Body of pancreas (tissue), 4 donors: ENCODE measurements at regions of chr13 and their contacts with region 1.

Region 1: DNA sequence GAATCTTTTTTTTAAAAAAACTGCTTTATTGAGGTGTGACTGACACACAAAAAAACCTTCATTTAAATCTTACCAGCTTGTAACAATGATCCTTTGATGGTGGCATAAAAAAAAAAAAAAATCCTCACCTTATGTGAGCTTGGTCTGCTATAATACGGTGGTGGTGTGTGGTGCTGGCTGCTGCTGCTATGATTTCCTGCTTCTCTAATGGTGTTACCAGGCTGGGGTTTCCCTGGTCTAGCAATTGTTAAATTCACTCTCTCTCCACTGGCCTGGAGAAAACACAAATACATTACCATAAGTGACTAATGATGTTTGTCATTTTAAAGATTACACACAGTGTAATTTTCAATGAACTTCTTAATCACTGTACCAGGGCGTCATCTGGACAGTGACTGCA is 60.6 kb downstream of the LNX2 start:
- DNase-seq: no peak
- ATAC-seq: no peak
- H3K4me3 ChIP-seq: no peak overlapping the region
- H3K27ac ChIP-seq: no peak overlapping the region
- H3K4me1 ChIP-seq: no peaks in the 10 kb centered on the region
- H3K27me3 ChIP-seq: no peaks in the 10 kb centered on the region
- CTCF ChIP-seq: no peak
- POLR2A ChIP-seq: no peak

Region 2: DNA sequence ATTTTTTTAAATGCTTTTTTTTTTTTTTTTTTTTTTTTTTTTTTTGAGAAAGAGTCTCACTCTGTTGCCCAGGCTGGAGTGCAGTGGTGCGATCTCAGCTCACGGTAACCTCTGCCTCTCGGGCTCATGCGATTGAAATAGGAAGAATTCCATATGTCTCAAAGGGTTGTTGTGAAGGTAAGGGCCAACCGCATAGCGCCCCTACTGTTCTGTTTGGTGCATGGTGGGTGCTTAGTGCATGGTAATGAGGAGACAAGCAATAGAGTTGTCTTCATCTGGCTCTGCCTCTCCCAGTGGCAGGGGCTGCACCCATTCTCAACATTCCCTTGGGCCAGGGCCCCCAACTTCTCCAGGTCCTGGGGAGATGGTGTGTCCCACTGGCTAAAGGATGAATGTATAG is 220.4 kb before region 1 on chr13:
- intact Hi-C with region 1: no loop called
- DNase-seq: peak; percentile 25 to 47 (median 34)
- ATAC-seq: peak; percentile 55
- H3K4me3 ChIP-seq: no peak overlapping the region
- H3K27ac ChIP-seq: no peak overlapping the region
- H3K4me1 ChIP-seq: no peaks in the 10 kb centered on the region
- H3K27me3 ChIP-seq: no peaks in the 10 kb centered on the region
- CTCF ChIP-seq: peak in 6 of 7 experiments; percentile 22 to 42 (median 36)
- POLR2A ChIP-seq: no peak

Region 3: DNA sequence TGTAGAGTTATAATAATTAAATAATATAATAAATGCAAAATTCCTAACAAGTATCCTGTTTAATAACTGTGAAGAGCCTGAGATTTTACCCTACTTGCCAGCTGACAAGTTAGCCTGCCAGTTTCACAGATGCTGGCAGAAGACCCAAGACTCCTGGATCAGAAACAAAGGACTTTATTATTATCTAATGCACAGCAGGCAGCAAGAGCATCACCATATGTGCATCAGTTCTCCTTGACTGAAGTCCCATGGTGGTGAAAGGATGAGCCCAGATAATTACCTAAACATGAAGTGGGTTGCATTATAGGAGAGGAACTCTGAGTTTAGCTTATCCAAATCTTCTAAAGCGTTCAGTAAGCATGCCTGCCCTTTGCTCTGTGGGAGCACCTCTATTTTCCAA is 70.3 kb before region 1 on chr13:
- intact Hi-C with region 1: no loop called
- DNase-seq: no peak
- ATAC-seq: no peak
- H3K4me3 ChIP-seq: no peak overlapping the region
- H3K27ac ChIP-seq: no peak overlapping the region
- H3K4me1 ChIP-seq: no peaks in the 10 kb centered on the region
- H3K27me3 ChIP-seq: no peaks in the 10 kb centered on the region
- CTCF ChIP-seq: no peak
- POLR2A ChIP-seq: no peak

Region 4: DNA sequence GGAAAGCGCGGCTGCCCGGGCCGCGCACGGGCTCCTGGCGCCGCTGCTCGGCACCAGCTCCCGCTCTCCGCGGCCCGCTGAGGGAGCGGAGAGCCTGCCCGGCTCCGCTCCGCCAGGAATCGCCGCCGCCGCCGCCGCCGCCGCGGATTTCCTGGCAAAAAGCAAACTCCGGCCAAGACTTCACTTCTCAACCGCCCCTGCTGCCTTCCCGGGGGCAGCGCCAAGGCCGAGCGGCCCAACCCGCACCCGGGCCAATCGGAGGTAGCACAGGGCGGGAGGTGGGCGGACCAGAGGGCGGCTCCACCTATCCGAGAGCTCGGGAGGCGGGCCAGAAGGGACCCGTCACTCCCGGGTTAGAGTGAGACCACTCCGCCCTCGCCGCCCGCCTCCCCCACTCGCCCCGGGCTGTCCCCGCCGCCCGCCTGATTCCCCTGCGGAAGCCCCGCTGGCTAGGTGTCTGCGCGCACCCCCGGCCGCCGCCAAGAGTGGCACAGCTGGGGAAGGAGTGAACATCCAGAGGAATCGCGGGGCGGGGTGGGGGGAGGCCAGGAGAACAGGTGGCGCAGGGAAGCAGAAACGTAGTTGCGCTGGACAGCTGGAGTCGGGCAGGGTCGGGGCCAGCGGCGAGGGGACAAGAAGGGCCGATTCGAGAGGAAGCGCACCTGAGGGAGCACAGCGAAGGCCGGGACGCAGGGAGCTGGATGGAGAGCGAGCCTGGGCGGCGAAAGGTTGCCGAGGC is 60.8 kb after region 1 on chr13 and contains the start of gene LNX2:
- intact Hi-C with region 1: loop called (anchors 10 kb)
- DNase-seq: peak; percentile 98 to 99 (median 99)
- ATAC-seq: peak; percentile 84
- H3K4me3 ChIP-seq: peak within 1 kb of the TSS; percentile 79 to 91
- H3K27ac ChIP-seq: peak within 1 kb of the TSS; percentile 98 to 100 (median 100)
- H3K4me1 ChIP-seq: peaks cover 68% of the 10 kb centered on the region
- H3K27me3 ChIP-seq: no peaks in the 10 kb centered on the region
- CTCF ChIP-seq: no peak
- POLR2A ChIP-seq: peak; percentile 89 to 97 (median 93)
- total RNA-seq, gene LNX2: 11.2 to 23.1 TPM

Region 5: DNA sequence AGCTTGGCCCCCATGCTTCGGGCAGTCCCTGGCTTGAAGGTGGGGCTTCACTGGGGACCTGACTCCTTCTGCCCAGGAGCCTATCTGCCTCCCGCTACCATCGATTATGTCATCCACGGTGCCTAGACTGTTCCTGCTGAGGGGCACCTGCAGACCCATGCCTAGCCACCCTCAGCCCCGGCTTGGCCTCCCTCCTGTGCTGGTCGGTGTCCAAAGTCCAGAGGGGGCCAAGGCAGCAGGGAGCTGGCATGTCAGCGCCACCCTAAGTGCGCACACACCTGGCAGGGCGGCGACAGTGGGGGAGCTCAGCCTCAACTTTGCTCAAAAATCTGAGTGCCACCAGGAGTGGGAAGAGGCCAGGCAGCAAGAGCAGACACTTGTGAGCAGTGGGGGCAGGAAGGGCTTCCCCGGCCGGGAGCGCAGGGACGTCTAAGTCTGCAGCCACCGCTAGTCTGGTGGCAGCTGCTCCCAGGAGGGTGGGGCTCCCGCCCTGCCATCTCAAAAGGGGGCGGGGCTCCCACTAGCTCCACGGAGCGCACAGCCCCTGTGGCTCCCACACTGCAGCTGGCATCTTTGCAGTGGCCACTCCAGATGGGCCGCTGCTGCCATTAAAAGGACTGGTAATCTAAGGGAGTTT is 442.2 kb after region 1 on chr13:
- intact Hi-C with region 1: no loop called
- DNase-seq: no peak
- ATAC-seq: no peak
- H3K4me3 ChIP-seq: no peak overlapping the region
- H3K27ac ChIP-seq: no peak overlapping the region
- H3K4me1 ChIP-seq: peaks cover 7% of the 10 kb centered on the region
- H3K27me3 ChIP-seq: no peaks in the 10 kb centered on the region
- CTCF ChIP-seq: no peak
- POLR2A ChIP-seq: no peak